WTC11 (cell line): ENCODE measurements at regions of chr6 and their contacts with region 1.

Region 1: DNA sequence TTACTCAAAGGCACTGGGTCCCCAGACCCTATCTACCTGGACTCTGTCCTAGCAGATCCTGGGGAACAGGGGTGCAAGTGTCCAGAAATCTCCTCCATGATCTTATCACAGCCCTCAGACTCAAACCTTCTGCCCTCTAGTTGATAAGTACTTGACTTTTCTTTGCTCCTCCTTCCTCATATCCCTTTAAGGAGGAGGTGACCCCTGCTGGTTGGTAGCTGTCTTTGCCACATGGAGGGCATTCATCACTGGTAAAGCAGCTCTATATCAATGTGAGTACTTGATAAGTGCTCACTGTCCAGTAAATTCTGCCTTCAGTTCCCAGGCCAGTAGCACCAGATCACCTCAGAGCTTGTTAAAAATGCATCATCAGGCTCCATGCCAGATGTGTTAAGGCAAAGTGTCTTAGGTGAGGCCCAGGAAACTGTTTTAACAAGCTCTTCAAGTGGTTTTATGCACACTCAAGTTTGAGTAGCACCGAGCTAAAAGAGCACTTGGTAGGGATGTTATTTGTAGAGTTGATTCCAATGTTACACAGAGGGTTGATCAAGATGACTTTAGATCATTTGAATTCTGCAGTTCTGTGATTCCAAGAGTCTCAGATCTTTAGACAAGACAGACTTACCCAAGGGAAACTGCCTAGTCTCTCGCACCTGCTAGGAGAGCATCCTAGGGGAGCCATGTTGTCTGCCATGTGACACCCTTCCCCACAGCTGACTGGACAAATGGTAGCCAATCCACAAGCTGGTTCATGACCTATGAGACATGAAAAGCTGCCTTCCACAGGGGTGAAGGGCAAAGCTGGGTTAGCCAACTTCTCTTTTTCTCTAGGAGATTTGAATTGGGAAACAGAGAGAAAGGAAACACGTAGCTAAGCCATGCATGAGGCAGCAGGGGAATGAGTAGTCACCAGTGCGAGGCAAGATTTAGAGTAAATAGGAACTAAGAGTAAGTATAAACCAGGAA is 18.6 kb downstream of the TREML2 start:
- DNase-seq: peak; percentile 47
- ATAC-seq: peak; percentile 93
- H3K4me3 Mint-ChIP-seq: no peak overlapping the region
- H3K27ac Mint-ChIP-seq: no peak overlapping the region
- H3K4me1 Mint-ChIP-seq: peaks cover 9% of the 10 kb centered on the region; the same call in 1 of the 2 replicates
- H3K27me3 Mint-ChIP-seq: no peaks in the 10 kb centered on the region
- CTCF ChIP-seq: no peak; the same call in none of the 2 replicates

Region 2: GRCh38 chr6:41100871-41101287 is 81.5 kb before region 1 on chr6:
- CTCF ChIA-PET with region 1: interaction called, 115 read pairs
- POLR2A ChIA-PET with region 1: interaction called, 3 read pairs
- DNase-seq: peak; percentile 94
- ATAC-seq: peak; percentile 98
- H3K4me3 Mint-ChIP-seq: peak overlapping the region; percentile 48
- H3K27ac Mint-ChIP-seq: peak overlapping the region; percentile 80; the same call in 1 of the 2 replicates
- H3K4me1 Mint-ChIP-seq: peaks cover 18% of the 10 kb centered on the region
- H3K27me3 Mint-ChIP-seq: peaks cover 6% of the 10 kb centered on the region; the same call in 1 of the 2 replicates
- CTCF ChIP-seq: no peak

Region 3: GRCh38 chr6:41167173-41167963 is 15.0 kb before region 1 on chr6:
- CTCF ChIA-PET with region 1: interaction called, 12 read pairs
- POLR2A ChIA-PET with region 1: no interaction called
- DNase-seq: peak; percentile 71
- ATAC-seq: peak; percentile 57
- H3K4me3 Mint-ChIP-seq: no peak overlapping the region
- H3K27ac Mint-ChIP-seq: no peak overlapping the region
- H3K4me1 Mint-ChIP-seq: peaks cover 16% of the 10 kb centered on the region
- H3K27me3 Mint-ChIP-seq: no peaks in the 10 kb centered on the region; the same call in 1 of the 2 replicates
- CTCF ChIP-seq: no peak